ENCODE measurements at regions of chr19 and their contacts with region 1.

Region 1: DNA sequence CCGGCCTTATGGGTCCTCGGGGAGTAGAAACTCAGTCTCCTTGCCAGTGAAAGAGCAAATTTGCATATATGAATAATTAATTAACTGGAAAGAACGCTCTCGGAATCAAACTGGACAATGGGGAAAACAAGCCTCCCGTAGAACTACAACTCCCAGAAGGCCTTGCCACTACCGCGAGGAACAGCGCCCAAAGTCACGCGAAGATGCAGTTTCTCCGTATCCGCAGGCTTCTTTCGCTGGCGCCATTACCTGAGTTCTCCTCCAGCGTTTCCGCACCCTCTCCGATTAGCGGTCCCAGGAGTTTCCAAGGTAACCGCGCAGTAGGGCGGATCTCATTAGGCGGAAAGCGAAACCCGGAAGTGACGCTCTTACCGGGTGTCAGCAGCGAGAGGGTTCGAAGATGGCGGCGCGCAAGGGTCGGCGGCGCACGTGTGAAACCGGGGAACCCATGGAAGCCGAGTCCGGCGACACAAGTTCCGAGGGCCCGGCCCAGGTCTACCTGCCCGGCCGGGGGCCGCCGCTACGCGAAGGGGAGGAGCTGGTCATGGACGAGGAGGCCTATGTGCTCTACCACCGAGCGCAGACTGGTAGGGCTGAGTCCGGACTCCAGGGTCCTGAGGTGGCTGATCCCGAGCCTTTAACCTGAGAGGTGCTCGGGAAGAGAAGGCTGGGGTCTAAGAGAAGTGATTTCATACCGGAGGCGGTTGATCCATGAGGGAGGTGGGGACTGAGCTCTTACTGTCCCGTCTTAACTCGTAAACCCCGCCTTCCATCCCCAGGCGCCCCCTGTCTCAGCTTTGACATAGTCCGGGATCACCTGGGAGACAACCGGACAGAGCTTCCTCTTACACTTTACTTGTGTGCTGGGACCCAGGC is at the start of gene GRWD1:
- DNase-seq: peak; percentile 96
- H3K4me3 Mint-ChIP-seq: peak within 1 kb of the TSS; percentile 87
- H3K27ac Mint-ChIP-seq: peak within 1 kb of the TSS; percentile 93
- H3K4me1 Mint-ChIP-seq: peaks cover 28% of the 10 kb centered on the region
- H3K27me3 Mint-ChIP-seq: peaks cover 18% of the 10 kb centered on the region
- total RNA-seq, gene GRWD1: 38.8 to 45.3 TPM

Region 2: GRCh38 chr19:48321622-48322591 is 123.9 kb before region 1 on chr19:
- CTCF ChIA-PET with region 1: interaction called, 4 read pairs
- POLR2A ChIA-PET with region 1: no interaction called
- intact Hi-C with region 1: loop called (anchors 5 kb)
- DNase-seq: peak; percentile 99
- H3K4me3 Mint-ChIP-seq: peak overlapping the region; percentile 88
- H3K27ac Mint-ChIP-seq: peak overlapping the region; percentile 99
- H3K4me1 Mint-ChIP-seq: peaks cover 51% of the 10 kb centered on the region
- H3K27me3 Mint-ChIP-seq: no peaks in the 10 kb centered on the region

Region 3: GRCh38 chr19:48391107-48391986 is 54.5 kb before region 1 on chr19 and contains the start of gene KDELR1:
- CTCF ChIA-PET with region 1: interaction called, 13 read pairs
- POLR2A ChIA-PET with region 1: no interaction called
- intact Hi-C with region 1: no loop called
- DNase-seq: peak; percentile 80
- H3K4me3 Mint-ChIP-seq: peak within 1 kb of the TSS; percentile 90
- H3K27ac Mint-ChIP-seq: peak within 1 kb of the TSS; percentile 87
- H3K4me1 Mint-ChIP-seq: peaks cover 25% of the 10 kb centered on the region
- H3K27me3 Mint-ChIP-seq: peaks cover 23% of the 10 kb centered on the region
- total RNA-seq, gene KDELR1: 82.9 to 88.1 TPM

Region 4: GRCh38 chr19:48398375-48399235 is 47.2 kb before region 1 on chr19:
- CTCF ChIA-PET with region 1: interaction called, 3 read pairs
- POLR2A ChIA-PET with region 1: no interaction called
- intact Hi-C with region 1: loop called (anchors 2 kb)
- DNase-seq: peak; percentile 92
- H3K4me3 Mint-ChIP-seq: peak overlapping the region; percentile 76
- H3K27ac Mint-ChIP-seq: peak overlapping the region; percentile 29
- H3K4me1 Mint-ChIP-seq: peaks cover 32% of the 10 kb centered on the region
- H3K27me3 Mint-ChIP-seq: peaks cover 31% of the 10 kb centered on the region

Region 5: DNA sequence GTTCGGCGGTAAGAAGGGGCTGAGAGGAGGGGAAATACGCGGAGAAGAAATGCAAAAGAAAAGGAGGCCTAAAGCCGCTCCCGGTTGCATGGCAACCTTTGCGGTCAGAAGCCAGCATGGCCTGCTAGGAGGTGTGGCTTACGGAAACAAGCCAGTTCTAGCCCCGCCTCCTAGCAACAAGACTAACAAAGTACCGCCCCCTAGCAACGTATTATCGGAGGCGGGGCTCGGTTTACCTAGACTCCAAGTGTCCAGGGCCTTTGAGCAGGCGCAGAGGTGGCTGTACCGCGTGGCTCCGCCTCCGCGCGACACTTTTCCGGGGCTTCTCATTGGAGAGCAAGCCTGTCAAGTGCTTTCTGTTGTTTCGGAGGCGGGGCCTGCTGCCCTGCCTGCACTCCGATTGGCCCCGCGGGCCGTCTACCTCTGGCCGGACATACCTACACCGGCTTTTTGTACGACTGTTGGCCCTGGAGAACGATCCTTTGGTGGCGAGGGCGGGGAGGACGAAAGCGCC is 23.0 kb after region 1 on chr19:
- CTCF ChIA-PET with region 1: no interaction called
- POLR2A ChIA-PET with region 1: interaction called, 3 read pairs
- intact Hi-C with region 1: loop called (anchors 1 kb)
- DNase-seq: peak; percentile 100
- H3K4me3 Mint-ChIP-seq: peak overlapping the region; percentile 83
- H3K27ac Mint-ChIP-seq: peak overlapping the region; percentile 84
- H3K4me1 Mint-ChIP-seq: peaks cover 22% of the 10 kb centered on the region
- H3K27me3 Mint-ChIP-seq: no peaks in the 10 kb centered on the region

Region 6: GRCh38 chr19:48480558-48481500 is 35.0 kb after region 1 on chr19:
- CTCF ChIA-PET with region 1: no interaction called
- POLR2A ChIA-PET with region 1: no interaction called
- intact Hi-C with region 1: no loop called
- DNase-seq: peak; percentile 69
- H3K4me3 Mint-ChIP-seq: peak overlapping the region; percentile 73
- H3K27ac Mint-ChIP-seq: peak overlapping the region; percentile 70
- H3K4me1 Mint-ChIP-seq: peaks cover 14% of the 10 kb centered on the region
- H3K27me3 Mint-ChIP-seq: no peaks in the 10 kb centered on the region

Measured in activated CD4-positive, alpha-beta memory T cell treated with anti-CD3 and anti-CD28 coated beads for 36 hours (primary cell).